WTC11 (cell line): ENCODE measurements at regions of chr5 and their contacts with region 1.

Region 1: DNA sequence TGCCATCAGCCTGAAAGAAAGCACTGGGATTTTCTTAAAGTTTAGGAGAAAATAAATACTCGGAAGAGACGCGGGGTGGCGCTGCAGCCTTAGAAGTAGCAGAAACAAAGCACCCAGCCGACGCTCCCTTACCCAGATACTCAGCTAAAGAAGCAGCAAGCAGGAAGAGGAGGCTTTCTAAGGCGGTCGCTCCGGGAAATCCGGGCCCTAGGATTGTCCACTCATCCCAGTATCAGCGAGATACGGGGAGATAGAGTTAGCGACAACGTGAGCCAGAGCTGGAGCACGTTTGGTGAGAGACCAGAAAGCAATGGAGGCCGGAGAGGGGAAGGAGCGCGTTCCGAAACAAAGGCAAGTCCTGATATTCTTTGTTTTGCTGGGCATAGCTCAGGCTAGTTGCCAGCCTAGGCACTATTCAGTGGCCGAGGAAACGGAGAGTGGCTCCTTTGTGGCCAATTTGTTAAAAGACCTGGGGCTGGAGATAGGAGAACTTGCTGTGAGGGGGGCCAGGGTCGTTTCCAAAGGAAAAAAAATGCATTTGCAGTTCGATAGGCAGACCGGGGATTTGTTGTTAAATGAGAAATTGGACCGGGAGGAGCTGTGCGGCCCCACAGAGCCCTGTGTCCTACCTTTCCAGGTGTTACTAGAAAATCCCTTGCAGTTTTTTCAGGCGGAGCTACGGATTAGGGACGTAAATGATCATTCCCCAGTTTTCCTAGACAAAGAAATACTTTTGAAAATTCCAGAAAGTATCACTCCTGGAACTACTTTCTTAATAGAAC is at the start of gene PCDHB2:
- DNase-seq: peak; percentile 83
- ATAC-seq: peak; percentile 94
- H3K4me3 Mint-ChIP-seq: peak within 1 kb of the TSS; percentile 95
- H3K27ac Mint-ChIP-seq: peak within 1 kb of the TSS; percentile 97
- H3K4me1 Mint-ChIP-seq: peaks cover 12% of the 10 kb centered on the region
- H3K27me3 Mint-ChIP-seq: no peaks in the 10 kb centered on the region
- CTCF ChIP-seq: peak; percentile 88
- total RNA-seq, gene PCDHB2: 22.9 to 26.2 TPM (median 23.1 TPM) in 3 replicates

Region 2: DNA sequence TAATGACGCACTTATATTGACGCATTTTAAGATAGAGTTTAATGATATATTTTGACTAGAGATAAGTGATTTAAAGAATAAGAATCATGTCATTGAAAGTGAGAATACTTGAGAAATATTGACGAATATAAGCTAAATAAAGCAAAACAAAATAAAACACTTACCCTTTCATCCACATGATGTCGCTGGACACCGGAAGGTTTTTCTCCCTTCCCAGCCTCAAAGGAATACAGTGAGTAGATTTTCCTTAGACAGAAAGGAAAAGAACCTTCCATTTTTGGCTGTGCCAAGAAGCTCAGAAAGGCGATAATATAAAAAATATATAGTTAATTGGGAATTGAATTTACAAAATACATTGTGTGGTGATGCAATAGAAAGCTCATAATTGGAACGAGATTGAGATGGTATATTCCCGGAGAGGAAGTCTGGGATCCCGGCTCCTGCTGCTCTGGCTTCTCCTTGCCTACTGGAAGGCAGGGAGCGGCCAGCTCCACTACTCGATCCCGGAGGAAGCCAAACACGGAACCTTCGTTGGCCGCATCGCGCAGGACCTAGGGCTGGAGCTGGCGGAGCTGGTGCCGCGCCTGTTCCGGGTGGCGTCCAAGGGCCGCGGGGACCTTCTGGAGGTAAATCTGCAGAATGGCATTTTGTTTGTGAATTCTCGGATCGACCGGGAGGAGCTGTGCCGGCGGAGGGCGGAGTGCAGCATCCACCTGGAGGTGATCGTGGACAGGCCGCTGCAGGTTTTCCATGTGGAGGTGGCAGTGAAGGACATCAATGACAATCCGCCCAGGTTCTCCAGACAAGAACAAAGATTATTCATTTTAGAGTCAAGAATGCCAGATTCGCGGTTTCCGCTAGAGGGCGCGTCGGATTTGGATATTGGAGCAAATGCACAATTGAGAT is 273.0 kb before region 1 on chr5 and contains the start of gene PCDHA5:
- CTCF ChIA-PET with region 1: no interaction called
- POLR2A ChIA-PET with region 1: no interaction called
- DNase-seq: no peak
- ATAC-seq: no peak
- H3K4me3 Mint-ChIP-seq: peak within 1 kb of the TSS; percentile 30; the same call in 1 of the 2 replicates
- H3K27ac Mint-ChIP-seq: no peak within 1 kb of the TSS
- H3K4me1 Mint-ChIP-seq: no peaks in the 10 kb centered on the region
- H3K27me3 Mint-ChIP-seq: no peaks in the 10 kb centered on the region
- CTCF ChIP-seq: no peak
- total RNA-seq, gene PCDHA5: 0.85 to 0.94 TPM (median 0.90 TPM) in 3 replicates

Region 3: GRCh38 chr5:140855772-140856674 is 238.6 kb before region 1 on chr5 and contains the start of gene PCDHA10:
- CTCF ChIA-PET with region 1: interaction called, 14 read pairs
- POLR2A ChIA-PET with region 1: no interaction called
- DNase-seq: peak; percentile 48
- ATAC-seq: peak; percentile 84
- H3K4me3 Mint-ChIP-seq: peak within 1 kb of the TSS; percentile 92
- H3K27ac Mint-ChIP-seq: peak within 1 kb of the TSS; percentile 78
- H3K4me1 Mint-ChIP-seq: peaks cover 23% of the 10 kb centered on the region
- H3K27me3 Mint-ChIP-seq: no peaks in the 10 kb centered on the region
- CTCF ChIP-seq: peak; percentile 36
- total RNA-seq, gene PCDHA10: 10.8 to 12.0 TPM (median 11.6 TPM) in 3 replicates

Region 4: DNA sequence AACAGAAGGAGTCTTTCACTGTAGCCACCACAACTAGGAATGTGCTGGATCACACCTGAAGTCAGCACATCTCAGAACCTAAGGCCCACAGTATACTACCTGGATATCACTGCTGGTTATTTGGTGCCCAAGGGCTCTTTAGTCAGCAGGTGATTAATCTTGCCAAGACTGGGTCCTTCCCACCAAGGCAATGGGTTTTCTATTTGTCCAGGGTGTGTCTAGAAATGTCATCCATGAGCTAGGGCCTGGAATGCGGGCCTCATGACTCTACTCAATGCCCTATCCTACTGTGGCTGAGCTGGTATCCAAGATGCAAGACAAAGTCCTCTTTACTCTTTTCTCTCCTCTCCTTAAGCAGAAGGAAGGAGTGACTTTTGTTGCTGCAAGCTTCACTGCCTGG is 178.3 kb before region 1 on chr5:
- CTCF ChIA-PET with region 1: no interaction called
- POLR2A ChIA-PET with region 1: no interaction called
- DNase-seq: no peak
- ATAC-seq: no peak
- H3K4me3 Mint-ChIP-seq: no peak overlapping the region
- H3K27ac Mint-ChIP-seq: no peak overlapping the region
- H3K4me1 Mint-ChIP-seq: no peaks in the 10 kb centered on the region
- H3K27me3 Mint-ChIP-seq: no peaks in the 10 kb centered on the region; the same call in 1 of the 2 replicates
- CTCF ChIP-seq: no peak

Region 5: DNA sequence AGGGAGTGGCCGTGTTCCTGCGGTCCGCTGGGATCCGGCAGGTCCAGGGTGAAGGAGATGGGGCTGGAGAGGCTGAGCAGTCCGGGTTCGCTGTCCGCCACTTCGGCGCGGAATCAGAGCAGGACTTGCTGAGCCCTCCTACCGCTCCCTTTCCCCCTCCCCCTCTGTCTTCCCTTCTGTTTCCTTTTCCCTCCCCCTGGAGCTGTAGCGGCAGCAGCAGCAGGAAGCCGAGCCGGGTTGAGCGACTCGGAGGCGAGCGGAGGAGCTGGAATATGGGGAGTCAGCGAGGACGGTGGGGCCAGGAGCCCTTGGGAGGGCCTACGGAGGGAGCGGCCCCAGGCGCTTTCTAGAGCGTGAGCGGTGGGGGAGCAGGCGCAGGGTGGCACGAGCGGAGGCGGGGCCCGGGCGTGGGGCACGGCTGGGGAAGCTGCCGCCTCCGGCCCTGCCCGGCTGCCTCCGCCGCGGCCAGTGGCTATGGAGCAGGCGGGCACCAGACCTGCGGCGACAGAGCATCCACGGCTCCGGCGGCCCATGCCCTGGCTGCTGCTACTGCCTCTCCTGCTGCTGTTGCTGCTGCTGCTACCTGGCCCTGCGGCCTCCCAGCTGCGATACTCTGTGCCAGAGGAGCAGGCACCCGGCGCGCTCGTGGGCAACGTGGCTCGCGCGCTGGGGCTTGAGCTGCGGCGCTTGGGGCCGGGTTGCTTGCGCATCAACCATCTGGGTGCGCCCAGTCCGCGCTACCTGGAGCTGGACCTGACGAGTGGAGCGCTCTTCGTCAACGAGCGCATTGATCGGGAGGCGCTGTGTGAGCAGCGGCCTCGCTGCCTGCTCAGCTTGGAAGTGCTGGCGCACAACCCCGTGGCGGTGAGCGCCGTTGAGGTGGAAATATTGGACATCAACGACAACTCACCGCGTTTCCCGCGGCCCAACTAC is 128.1 kb before region 1 on chr5 and contains the start of gene PCDHAC2:
- CTCF ChIA-PET with region 1: interaction called, 10 read pairs
- POLR2A ChIA-PET with region 1: no interaction called
- DNase-seq: peak; percentile 78
- ATAC-seq: peak; percentile 77
- H3K4me3 Mint-ChIP-seq: peak within 1 kb of the TSS; percentile 92
- H3K27ac Mint-ChIP-seq: peak within 1 kb of the TSS; percentile 51; the same call in 1 of the 2 replicates
- H3K4me1 Mint-ChIP-seq: peaks cover 50% of the 10 kb centered on the region
- H3K27me3 Mint-ChIP-seq: peaks cover 21% of the 10 kb centered on the region
- CTCF ChIP-seq: no peak
- total RNA-seq, gene PCDHAC2: 6.7 to 11.3 TPM (median 7.9 TPM) in 3 replicates

Region 6: DNA sequence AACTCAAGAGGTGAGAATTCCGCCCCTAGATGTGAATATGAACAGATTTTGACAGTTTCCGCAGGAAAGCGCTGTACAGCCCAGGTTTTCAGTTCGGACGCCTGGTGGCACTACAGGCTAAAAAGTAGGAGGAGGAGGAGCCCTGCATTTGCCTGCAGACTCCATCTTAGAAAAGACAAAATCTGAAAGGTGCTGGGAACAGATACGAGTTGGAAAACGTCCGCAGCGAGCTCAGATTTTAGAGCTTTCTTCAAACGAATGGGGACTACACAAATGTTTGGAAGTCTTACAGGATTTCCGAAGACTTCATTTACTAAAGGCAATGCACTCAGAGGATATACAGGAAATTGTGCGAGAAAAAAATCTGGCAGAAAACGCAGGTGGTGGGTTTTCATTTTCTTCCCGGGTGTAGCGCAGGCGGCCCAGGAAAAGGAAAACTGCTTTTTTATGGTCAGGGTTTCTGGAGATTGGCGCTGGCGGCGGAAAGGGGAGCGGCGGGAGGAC is 10.1 kb before region 1 on chr5:
- CTCF ChIA-PET with region 1: interaction called, 26 read pairs
- POLR2A ChIA-PET with region 1: no interaction called
- DNase-seq: peak; percentile 68
- ATAC-seq: peak; percentile 99
- H3K4me3 Mint-ChIP-seq: peak overlapping the region; percentile 90
- H3K27ac Mint-ChIP-seq: peak overlapping the region; percentile 97
- H3K4me1 Mint-ChIP-seq: peaks cover 16% of the 10 kb centered on the region
- H3K27me3 Mint-ChIP-seq: no peaks in the 10 kb centered on the region; the same call in none of the 2 replicates
- CTCF ChIP-seq: no peak

Region 7: DNA sequence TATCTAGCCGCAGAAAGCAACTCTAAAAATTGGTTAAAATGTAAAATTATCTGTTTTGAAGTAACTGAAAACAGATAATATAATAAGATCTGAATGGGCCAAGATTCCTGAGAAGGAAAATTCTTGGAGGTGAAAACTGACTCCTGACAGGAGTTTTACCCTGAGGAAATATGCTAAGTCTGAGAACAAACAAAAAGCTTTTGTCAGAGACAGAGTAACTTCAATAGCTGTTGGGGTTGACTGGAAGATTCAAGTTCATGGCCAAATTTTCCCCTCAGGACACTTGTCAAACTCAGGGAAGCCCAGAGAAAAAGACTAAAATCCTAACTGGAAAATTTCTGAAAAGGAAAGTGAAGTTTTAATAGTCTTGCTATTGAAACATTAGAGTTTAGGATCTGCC is 32.6 kb after region 1 on chr5:
- CTCF ChIA-PET with region 1: interaction called, 24 read pairs
- POLR2A ChIA-PET with region 1: no interaction called
- DNase-seq: no peak
- ATAC-seq: peak; percentile 60
- H3K4me3 Mint-ChIP-seq: no peak overlapping the region
- H3K27ac Mint-ChIP-seq: 0 out of 2 replicates have a peak overlapping the region, but pooled peaks have one; percentile 24
- H3K4me1 Mint-ChIP-seq: peaks cover 10% of the 10 kb centered on the region
- H3K27me3 Mint-ChIP-seq: no peaks in the 10 kb centered on the region
- CTCF ChIP-seq: no peak

Region 8: DNA sequence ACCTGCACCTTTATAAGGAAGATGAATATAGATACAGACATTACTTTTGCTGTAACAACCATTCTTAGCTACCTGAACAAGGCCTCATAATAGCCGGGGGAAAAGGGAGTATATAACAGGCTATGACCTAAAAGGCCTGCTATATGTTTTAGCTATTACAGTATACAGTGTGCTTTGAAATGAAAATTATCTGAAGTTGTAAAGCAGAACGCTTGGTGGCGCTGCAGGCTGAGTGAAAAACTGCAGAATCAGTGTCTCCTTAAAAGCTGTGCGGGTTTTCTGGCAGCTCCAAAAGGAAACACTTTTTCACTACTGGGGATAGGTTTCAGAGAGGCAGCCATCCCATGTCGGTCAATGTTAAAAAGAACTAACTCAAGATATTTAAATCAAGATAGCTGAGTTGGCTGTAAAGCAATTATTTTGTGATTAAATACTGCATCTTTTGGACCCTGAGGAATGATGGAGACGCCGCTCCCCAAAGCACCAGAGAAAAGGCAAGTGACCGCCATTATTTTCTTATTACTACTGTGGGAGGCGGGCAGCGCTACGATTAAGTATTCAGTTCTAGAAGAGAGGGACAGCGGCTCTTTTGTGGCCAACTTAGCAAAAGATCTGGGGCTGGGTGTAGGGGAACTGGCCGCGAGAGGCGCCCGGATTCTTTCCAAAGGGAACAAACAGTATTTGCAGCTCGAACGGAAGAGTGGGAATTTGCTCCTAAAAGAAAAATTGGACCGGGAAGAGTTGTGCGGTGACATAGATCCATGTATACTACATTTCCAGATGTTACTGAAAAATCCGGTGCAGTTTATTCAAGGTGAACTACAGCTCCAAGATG is 61.1 kb after region 1 on chr5:
- CTCF ChIA-PET with region 1: interaction called, 27 read pairs
- POLR2A ChIA-PET with region 1: interaction called, 3 read pairs
- DNase-seq: peak; percentile 61
- ATAC-seq: peak; percentile 84
- H3K4me3 Mint-ChIP-seq: peak overlapping the region; percentile 49
- H3K27ac Mint-ChIP-seq: no peak overlapping the region
- H3K4me1 Mint-ChIP-seq: 0 out of 2 replicates have a peak, but pooled peaks cover 5% of the 10 kb centered on the region
- H3K27me3 Mint-ChIP-seq: no peaks in the 10 kb centered on the region
- CTCF ChIP-seq: peak; percentile 55

Region 9: DNA sequence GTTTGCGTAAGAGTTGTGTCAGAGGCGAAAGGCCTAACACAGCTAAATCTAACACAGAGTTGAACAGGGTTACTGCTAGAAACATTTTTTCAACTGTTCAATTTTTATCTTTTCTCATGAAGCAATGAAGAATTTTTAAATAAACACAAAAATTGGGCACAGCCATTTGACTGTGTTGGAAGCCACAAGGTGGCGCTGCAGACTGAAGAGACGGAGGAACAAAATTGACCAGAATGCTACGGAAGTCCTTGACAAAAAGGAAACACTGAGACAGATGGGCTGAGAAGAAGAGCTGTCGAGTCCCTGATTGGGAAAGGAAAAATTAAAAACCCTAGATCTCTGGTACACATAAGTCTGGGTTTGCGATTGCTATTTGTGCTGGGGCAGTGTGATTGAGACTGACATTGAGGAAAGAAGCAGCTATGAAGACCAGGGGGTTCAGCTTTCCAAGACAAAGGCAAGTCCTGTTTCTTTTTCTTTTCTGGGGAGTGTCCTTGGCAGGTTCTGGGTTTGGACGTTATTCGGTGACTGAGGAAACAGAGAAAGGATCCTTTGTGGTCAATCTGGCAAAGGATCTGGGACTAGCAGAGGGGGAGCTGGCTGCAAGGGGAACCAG is 92.3 kb after region 1 on chr5 and contains the start of gene PCDHB9:
- CTCF ChIA-PET with region 1: interaction called, 25 read pairs
- POLR2A ChIA-PET with region 1: no interaction called
- DNase-seq: peak; percentile 71
- ATAC-seq: peak; percentile 58
- H3K4me3 Mint-ChIP-seq: peak within 1 kb of the TSS; percentile 21
- H3K27ac Mint-ChIP-seq: no peak within 1 kb of the TSS; the same call in 1 of the 2 replicates
- H3K4me1 Mint-ChIP-seq: peaks cover 15% of the 10 kb centered on the region
- H3K27me3 Mint-ChIP-seq: peaks cover 4% of the 10 kb centered on the region; the same call in 1 of the 2 replicates
- CTCF ChIP-seq: peak; percentile 49; the same call in 1 of the 2 replicates
- total RNA-seq, gene PCDHB9: 1.6 to 2.3 TPM (median 1.7 TPM) in 3 replicates